Naive thymus-derived CD4-positive, alpha-beta T cell (primary cell): ENCODE measurements at regions of chr4 and their contacts with region 1.

Region 1: GRCh38 chr4:139950568-139950967 is 203.4 kb downstream of the MAML3 start:
- DNase-seq: peak in 1 of 9 donors; percentile 59
- ATAC-seq: peak; percentile 67
- H3K4me3 ChIP-seq: no peak overlapping the region
- H3K4me3 Mint-ChIP-seq: peak overlapping the region in 4 of 10 donors; percentile 4 to 60 (median 36)
- H3K27ac ChIP-seq: no peak overlapping the region
- H3K27ac Mint-ChIP-seq: peak overlapping the region in 4 of 9 donors; percentile 3 to 80 (median 20)
- H3K4me1 ChIP-seq: no peaks in the 10 kb centered on the region
- H3K4me1 Mint-ChIP-seq: peaks cover 12 to 38% (median 15%) of the 10 kb centered on the region in 7 donors
- H3K27me3 ChIP-seq: no peaks in the 10 kb centered on the region
- H3K27me3 Mint-ChIP-seq: peaks cover 0 to 5% (median 0%) of the 10 kb centered on the region in 5 donors

Region 2: GRCh38 chr4:139898293-139898692 is 52.3 kb before region 1 on chr4:
- CTCF ChIA-PET with region 1: no interaction called
- POLR2A ChIA-PET with region 1: no interaction called
- intact Hi-C with region 1: loop called in 1 of 2 experiments (anchors 2 kb)
- DNase-seq: no peak
- ATAC-seq: peak; percentile 29
- H3K4me3 ChIP-seq: no peak overlapping the region
- H3K4me3 Mint-ChIP-seq: peak overlapping the region in 1 of 10 donors; percentile 22
- H3K27ac ChIP-seq: no peak overlapping the region
- H3K27ac Mint-ChIP-seq: peak overlapping the region in 2 of 9 donors; percentile 8 to 38
- H3K4me1 ChIP-seq: no peaks in the 10 kb centered on the region
- H3K4me1 Mint-ChIP-seq: peaks cover 3 to 19% (median 6%) of the 10 kb centered on the region in 7 donors
- H3K27me3 ChIP-seq: no peaks in the 10 kb centered on the region
- H3K27me3 Mint-ChIP-seq: peaks cover 0 to 4% (median 0%) of the 10 kb centered on the region in 5 donors

Region 3: GRCh38 chr4:140012688-140013486 is 62.3 kb after region 1 on chr4:
- CTCF ChIA-PET with region 1: no interaction called
- POLR2A ChIA-PET with region 1: no interaction called
- intact Hi-C with region 1: no loop called
- DNase-seq: peak; percentile 7 to 77 (median 66)
- ATAC-seq: peak; percentile 94
- H3K4me3 ChIP-seq: no peak overlapping the region
- H3K4me3 Mint-ChIP-seq: peak overlapping the region in 1 of 10 donors; percentile 1
- H3K27ac ChIP-seq: no peak overlapping the region
- H3K27ac Mint-ChIP-seq: peak overlapping the region in 1 of 9 donors; percentile 11
- H3K4me1 ChIP-seq: no peaks in the 10 kb centered on the region
- H3K4me1 Mint-ChIP-seq: peaks cover 5 to 9% (median 8%) of the 10 kb centered on the region in 7 donors
- H3K27me3 ChIP-seq: no peaks in the 10 kb centered on the region
- H3K27me3 Mint-ChIP-seq: peaks cover 0 to 39% (median 0%) of the 10 kb centered on the region in 5 donors